ENCODE measurements at regions of chrX and their contacts with region 1.

Region 1: GRCh38 chrX:132292793-132293192 is 73.5 kb upstream of the RAP2C start:
- DNase-seq: no peak

Region 2: DNA sequence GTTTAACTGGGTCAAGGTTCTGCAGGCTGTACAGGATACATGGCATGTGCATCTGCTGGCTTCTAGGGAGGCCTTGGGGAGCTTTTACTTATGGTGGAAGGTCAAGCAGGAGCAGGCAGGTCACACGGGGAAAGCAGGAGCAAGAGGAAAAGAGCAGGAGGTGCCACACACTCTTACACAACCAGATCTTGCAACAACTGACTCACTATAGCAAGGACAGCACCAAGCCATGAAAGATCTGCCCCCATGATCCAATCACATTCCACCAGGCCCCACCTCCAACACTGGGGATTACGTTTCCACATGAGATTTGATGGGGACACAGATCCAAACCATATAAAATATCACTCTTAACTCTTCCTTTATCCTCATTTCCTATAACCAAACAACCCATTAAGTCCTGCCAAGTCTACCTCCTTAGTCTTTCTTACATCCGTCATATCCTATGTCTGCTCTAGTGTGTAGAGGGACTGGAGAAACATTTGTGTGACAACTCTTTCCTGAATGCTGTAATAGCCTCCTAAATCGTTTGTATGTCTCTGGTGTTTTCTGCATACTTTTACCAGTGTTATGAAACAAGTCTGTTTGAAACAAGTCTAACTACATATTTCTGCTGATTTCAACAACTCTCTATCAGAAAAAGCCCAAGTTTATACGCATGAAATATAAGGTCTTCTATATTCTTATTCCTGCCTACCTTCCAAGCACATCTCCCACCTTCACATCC is 65.2 kb before region 1 on chrX:
- intact Hi-C with region 1: loop called in 1 of 2 experiments (anchors 1 kb)
- DNase-seq: no peak

Region 3: DNA sequence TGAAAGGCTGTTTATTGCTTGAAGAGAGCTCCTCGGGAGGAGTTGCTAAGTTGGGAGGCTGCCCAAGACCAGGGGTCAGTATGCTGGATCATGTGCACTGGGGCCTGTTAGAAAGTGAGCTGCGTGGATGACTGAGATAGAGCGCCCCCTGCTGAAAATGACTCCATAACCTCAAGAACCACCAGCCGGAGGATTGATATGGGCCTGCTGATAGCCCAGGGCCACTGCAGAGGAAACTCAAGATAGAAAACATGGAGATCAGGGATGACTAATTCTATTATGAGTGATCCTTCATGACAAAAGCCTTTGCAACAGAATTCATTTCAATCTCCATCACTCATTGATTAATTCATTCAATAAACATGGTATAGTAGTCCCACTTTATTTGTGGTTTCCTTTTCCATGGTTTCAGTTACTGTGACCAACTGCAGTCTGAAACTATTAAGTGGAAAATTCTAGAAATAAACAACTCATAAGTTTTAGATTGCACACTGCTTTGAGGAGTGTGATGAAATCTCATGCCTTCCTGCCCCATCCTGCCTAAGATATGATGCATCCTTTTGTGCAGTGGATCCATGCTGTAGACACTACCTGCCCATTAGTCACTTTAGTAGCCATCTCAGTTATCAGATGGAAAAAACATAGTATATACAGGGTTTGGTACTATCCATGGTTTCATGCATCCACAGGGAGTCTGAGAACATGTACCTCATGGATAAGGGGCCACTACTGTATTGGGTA is 322.8 kb after region 1 on chrX:
- intact Hi-C with region 1: loop called in 1 of 2 experiments (anchors 10 kb)
- DNase-seq: no peak